ENCODE measurements at regions of chr13 and their contacts with region 1.

Region 1: DNA sequence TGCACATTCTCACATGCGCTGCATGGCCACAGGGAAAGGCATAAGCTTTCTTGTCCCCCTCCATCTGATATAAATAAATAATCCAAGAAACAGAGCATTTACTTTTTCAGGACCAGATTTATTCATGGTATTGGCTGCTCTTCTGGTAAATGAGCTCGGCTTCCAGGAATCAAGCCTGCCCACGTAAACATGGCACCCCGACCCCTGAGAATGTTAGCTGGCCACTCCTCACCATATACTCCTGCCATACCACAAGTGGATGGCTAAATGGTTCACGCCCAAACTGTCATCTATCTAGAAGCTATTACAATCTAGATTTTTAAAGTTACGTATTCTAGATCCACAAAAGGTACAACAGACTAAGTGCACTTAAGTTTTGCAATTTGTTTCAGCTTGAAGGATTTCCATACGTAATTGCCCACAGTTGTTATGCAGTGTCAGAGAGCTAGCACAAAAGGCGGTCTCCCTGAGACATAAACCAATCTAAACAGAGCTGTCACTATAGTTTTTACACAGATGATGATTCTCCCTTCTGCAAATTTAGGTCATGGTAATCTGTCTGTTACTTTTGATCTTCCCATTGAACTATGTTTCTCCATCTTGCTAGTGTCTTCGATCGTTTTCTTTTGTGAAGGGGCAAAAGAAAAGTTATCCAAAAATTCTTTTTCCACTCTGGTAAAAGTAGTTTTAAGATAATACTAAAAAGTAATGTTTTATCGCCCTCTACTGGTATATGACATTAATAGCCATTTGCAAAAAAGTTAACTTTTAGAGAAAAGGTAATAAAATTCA is 16.2 kb upstream of the FOXO1 start:
- DNase-seq: no peak
- H3K4me3 ChIP-seq: no peak overlapping the region
- H3K27ac ChIP-seq: no peak overlapping the region
- H3K4me1 ChIP-seq: peaks cover 18% of the 10 kb centered on the region
- H3K27me3 ChIP-seq: no peaks in the 10 kb centered on the region
- CTCF ChIP-seq: peak; percentile 72

Region 2: GRCh38 chr13:39684531-39685137 is 998.0 kb before region 1 on chr13:
- intact Hi-C with region 1: loop called (anchors 10 kb)
- DNase-seq: no peak
- H3K4me3 ChIP-seq: no peak overlapping the region
- H3K27ac ChIP-seq: no peak overlapping the region
- H3K4me1 ChIP-seq: peaks cover 9% of the 10 kb centered on the region
- H3K27me3 ChIP-seq: no peaks in the 10 kb centered on the region
- CTCF ChIP-seq: peak; percentile 56

Region 3: GRCh38 chr13:39952249-39953233 is 730.1 kb before region 1 on chr13:
- intact Hi-C with region 1: loop called (anchors 10 kb)
- DNase-seq: no peak
- H3K4me3 ChIP-seq: no peak overlapping the region
- H3K27ac ChIP-seq: peak overlapping the region; percentile 32
- H3K4me1 ChIP-seq: peaks cover 21% of the 10 kb centered on the region
- H3K27me3 ChIP-seq: no peaks in the 10 kb centered on the region
- CTCF ChIP-seq: no peak

Region 4: GRCh38 chr13:40069173-40070044 is 613.2 kb before region 1 on chr13:
- intact Hi-C with region 1: loop called (anchors 5 kb)
- DNase-seq: peak; percentile 80
- H3K4me3 ChIP-seq: peak overlapping the region; percentile 7
- H3K27ac ChIP-seq: peak overlapping the region; percentile 33
- H3K4me1 ChIP-seq: peaks cover 7% of the 10 kb centered on the region
- H3K27me3 ChIP-seq: no peaks in the 10 kb centered on the region
- CTCF ChIP-seq: peak; percentile 93